ENCODE measurements at regions of chr7 and their contacts with region 1.

Region 1: GRCh38 chr7:33757562-33758165 is 147.7 kb upstream of the BMPER start:
- DNase-seq: peak in 1 of 2 donors; percentile 46
- H3K4me3 ChIP-seq: no peak overlapping the region
- H3K27ac ChIP-seq: no peak overlapping the region
- H3K4me1 ChIP-seq: peaks cover 0 to 7% (median 0%) of the 10 kb centered on the region in 4 donors
- H3K27me3 ChIP-seq: no peaks in the 10 kb centered on the region
- CTCF ChIP-seq: peak; percentile 66 to 72

Region 2: DNA sequence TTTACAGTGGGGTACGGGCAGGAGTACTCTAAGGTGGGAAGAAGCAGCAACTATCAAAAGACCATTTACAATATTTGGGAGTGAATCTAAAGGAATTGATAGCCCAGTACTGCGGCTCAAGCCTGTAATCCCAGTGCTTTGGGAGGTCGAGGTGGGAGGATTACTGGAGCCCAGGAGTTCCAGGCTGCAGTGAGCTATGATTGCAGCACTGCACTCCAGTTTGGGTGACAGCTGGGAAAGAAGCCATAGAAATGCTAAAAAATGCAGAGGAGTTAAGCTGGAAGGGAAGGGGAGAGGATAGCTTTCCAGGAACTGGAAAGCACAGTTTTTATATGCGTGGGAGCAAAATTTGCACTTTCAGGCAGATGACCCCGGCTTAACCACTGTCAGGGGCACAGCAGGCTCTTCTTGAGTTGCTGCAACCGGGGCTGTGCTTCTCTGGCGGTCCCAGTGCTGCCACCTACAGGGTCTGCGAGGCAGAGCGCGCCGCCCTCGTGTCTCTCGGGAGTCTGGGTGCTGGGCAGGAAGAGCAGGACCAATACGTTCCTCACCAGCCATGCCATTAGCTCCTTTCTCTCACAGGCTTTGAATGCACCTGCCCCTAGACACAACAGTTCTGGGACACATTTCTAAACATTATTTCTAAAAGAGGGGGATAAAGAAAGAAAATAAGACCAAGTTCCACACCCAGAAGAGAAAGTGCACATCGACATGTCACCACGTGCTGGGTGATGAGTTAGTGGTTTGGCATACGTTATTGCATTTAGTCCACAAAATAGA is 137.6 kb after region 1 on chr7:
- intact Hi-C with region 1: loop called (anchors 2 kb)
- DNase-seq: peak; percentile 91 to 92
- H3K4me3 ChIP-seq: no peak overlapping the region
- H3K27ac ChIP-seq: no peak overlapping the region
- H3K4me1 ChIP-seq: peaks cover 3 to 11% (median 10%) of the 10 kb centered on the region in 4 donors
- H3K27me3 ChIP-seq: no peaks in the 10 kb centered on the region
- CTCF ChIP-seq: peak; percentile 89 to 95

Region 3: GRCh38 chr7:33932832-33933468 is 175.3 kb after region 1 on chr7:
- intact Hi-C with region 1: loop called (anchors 2 kb)
- DNase-seq: peak; percentile 79 to 89
- H3K4me3 ChIP-seq: peak overlapping the region; percentile 39 to 50
- H3K27ac ChIP-seq: peak overlapping the region in 1 of 2 donors; percentile 25
- H3K4me1 ChIP-seq: peaks cover 0 to 8% (median 2%) of the 10 kb centered on the region in 4 donors
- H3K27me3 ChIP-seq: no peaks in the 10 kb centered on the region
- CTCF ChIP-seq: peak; percentile 93 to 97

Measured in tibial artery (tissue), 4 donors.